Motor neuron (in vitro differentiated cells): ENCODE measurements at regions of chr1 and their contacts with region 1.

Region 1: DNA sequence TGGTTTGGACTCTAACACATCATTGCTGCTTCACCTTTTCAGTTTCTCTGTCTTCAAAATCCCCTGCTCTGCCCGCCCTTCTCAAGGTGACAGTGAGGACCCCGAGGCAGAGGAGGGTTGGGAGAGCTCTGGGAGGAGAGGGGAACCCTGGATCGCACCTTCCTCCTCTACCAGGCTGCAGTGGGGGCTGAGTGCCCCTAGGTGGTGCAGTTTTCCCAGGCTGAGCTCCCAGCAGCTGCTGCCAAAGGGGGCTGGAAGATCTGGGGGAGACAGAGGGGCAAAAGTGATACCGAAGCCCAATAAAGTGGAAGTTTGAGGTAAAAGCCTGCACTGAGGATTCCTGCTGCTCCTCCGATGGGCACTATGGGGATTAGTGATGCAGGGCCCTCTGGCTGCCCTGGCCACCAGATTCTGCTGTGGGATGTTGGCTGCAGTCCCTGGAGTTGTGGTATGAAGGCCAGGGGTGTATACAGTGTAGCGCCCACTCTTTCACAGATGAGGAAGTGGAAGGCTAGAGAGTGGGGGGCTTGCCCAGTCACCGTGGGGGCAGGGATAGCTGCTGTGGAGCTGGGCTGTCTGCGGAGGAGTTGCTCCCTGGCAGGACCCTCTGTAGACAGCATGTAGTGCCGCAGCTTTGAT is 40.7 kb upstream of the SCMH1 start:
- ATAC-seq: peak; percentile 11 to 83 (median 32)
- H3K4me3 ChIP-seq: no peak overlapping the region
- H3K27ac ChIP-seq: no peak overlapping the region
- H3K4me1 ChIP-seq: peaks cover 22 to 31% of the 10 kb centered on the region in 2 donors

Region 2: DNA sequence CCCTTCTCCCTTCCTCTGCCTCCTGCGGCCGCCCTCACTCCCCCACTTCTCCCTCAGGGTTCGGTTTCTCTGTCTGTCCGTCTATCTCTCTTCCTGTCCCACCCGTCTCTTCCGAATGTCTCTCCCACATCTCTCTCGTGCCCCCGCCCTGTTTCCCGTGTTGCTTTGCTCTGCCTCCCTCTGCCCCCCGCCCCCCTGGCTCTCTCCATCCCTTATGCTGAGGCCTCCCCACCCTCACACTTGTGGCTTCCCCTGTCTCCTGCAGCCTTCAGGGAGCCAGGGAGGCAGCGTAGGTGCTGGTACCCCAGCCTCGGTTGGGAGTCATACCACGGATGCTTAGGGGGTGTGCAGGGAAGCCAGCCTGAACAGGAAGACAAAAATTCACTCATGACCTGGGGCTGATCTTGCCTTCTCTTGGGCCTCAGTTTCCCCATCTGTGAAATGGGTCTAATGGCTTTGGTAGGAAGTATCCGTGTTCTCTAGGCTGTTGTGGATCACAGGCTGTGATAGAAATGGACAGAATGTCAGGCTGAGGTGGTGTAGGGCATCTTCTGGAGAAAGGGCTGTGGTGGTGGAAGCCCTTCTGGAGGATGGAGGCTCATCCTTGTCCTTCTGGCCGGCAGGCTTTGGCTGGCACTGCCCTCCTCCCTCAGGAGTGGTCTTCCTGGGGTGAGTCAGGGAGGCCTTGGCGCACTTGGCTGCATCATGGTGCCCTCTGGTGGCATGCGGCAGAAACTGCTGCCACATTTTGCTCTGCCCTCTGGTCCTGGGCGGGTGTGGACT is 133.9 kb after region 1 on chr1:
- in situ Hi-C with region 1: loop called in 7 of 9 experiments (anchors 25 kb)
- ATAC-seq: peak in 7 of 8 experiments; percentile 9 to 85 (median 45)
- H3K4me3 ChIP-seq: no peak overlapping the region
- H3K27ac ChIP-seq: no peak overlapping the region
- H3K4me1 ChIP-seq: peaks cover 37 to 42% of the 10 kb centered on the region in 2 donors

Region 3: GRCh38 chr1:41432481-41433280 is 149.9 kb after region 1 on chr1:
- in situ Hi-C with region 1: loop called in 1 of 9 experiments (anchors 10 kb)
- ATAC-seq: peak; percentile 70 to 91 (median 78)
- H3K4me3 ChIP-seq: no peak overlapping the region
- H3K27ac ChIP-seq: no peak overlapping the region
- H3K4me1 ChIP-seq: peaks cover 10 to 14% of the 10 kb centered on the region in 2 donors